ENCODE measurements at regions of chr11 and their contacts with region 1.

Region 1: DNA sequence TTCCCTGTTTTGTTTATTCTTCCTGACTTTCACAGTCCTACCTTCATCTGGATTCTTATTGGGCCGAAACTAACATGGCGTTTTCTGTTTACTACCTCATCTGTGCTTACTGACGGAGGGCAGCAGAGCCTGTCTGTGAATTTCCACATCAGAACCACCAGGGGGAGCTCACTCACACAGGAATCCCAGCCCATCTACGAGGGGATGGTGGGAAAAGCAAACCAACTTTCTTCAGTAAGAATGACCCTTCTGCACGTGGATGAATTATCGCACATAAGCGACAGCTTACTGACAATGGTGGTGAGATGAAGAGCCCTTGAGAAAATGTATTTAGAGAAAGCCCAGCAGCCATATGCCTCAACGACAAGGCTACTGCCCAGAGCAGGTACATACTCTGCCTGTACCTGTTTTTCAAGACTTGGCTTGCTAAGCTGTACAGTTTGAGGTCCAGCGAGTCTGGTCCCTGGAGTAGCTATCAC is 42.5 kb downstream of the LARGE2 start:
- DNase-seq: peak; percentile 66
- ATAC-seq: peak; percentile 99
- H3K4me3 Mint-ChIP-seq: no peak overlapping the region
- H3K27ac Mint-ChIP-seq: no peak overlapping the region
- H3K4me1 Mint-ChIP-seq: no peaks in the 10 kb centered on the region
- H3K27me3 Mint-ChIP-seq: no peaks in the 10 kb centered on the region
- CTCF ChIP-seq: peak; percentile 85

Region 2: GRCh38 chr11:45872513-45873356 is 92.2 kb before region 1 on chr11:
- CTCF ChIA-PET with region 1: interaction called, 12 read pairs
- POLR2A ChIA-PET with region 1: no interaction called
- DNase-seq: peak; percentile 87
- ATAC-seq: peak; percentile 100
- H3K4me3 Mint-ChIP-seq: no peak overlapping the region
- H3K27ac Mint-ChIP-seq: no peak overlapping the region
- H3K4me1 Mint-ChIP-seq: peaks cover 27% of the 10 kb centered on the region
- H3K27me3 Mint-ChIP-seq: no peaks in the 10 kb centered on the region
- CTCF ChIP-seq: peak; percentile 68

Region 3: GRCh38 chr11:45930031-45930794 is 34.7 kb before region 1 on chr11:
- CTCF ChIA-PET with region 1: interaction called, 11 read pairs
- POLR2A ChIA-PET with region 1: no interaction called
- DNase-seq: no peak
- ATAC-seq: no peak; the same call in 1 of the 2 replicates
- H3K4me3 Mint-ChIP-seq: no peak overlapping the region
- H3K27ac Mint-ChIP-seq: peak overlapping the region; percentile 60
- H3K4me1 Mint-ChIP-seq: no peaks in the 10 kb centered on the region; the same call in 1 of the 2 replicates
- H3K27me3 Mint-ChIP-seq: no peaks in the 10 kb centered on the region
- CTCF ChIP-seq: no peak

Region 4: GRCh38 chr11:45949992-45950407 is 14.9 kb before region 1 on chr11:
- CTCF ChIA-PET with region 1: interaction called, 10 read pairs
- POLR2A ChIA-PET with region 1: no interaction called
- DNase-seq: no peak
- ATAC-seq: no peak
- H3K4me3 Mint-ChIP-seq: no peak overlapping the region
- H3K27ac Mint-ChIP-seq: no peak overlapping the region
- H3K4me1 Mint-ChIP-seq: no peaks in the 10 kb centered on the region
- H3K27me3 Mint-ChIP-seq: no peaks in the 10 kb centered on the region
- CTCF ChIP-seq: no peak

Region 5: GRCh38 chr11:45993531-45994001 is 28.6 kb after region 1 on chr11:
- CTCF ChIA-PET with region 1: interaction called, 66 read pairs
- POLR2A ChIA-PET with region 1: interaction called, 4 read pairs
- DNase-seq: no peak
- ATAC-seq: no peak
- H3K4me3 Mint-ChIP-seq: no peak overlapping the region
- H3K27ac Mint-ChIP-seq: peak overlapping the region; percentile 90
- H3K4me1 Mint-ChIP-seq: peaks cover 52% of the 10 kb centered on the region
- H3K27me3 Mint-ChIP-seq: no peaks in the 10 kb centered on the region
- CTCF ChIP-seq: no peak

Region 6: DNA sequence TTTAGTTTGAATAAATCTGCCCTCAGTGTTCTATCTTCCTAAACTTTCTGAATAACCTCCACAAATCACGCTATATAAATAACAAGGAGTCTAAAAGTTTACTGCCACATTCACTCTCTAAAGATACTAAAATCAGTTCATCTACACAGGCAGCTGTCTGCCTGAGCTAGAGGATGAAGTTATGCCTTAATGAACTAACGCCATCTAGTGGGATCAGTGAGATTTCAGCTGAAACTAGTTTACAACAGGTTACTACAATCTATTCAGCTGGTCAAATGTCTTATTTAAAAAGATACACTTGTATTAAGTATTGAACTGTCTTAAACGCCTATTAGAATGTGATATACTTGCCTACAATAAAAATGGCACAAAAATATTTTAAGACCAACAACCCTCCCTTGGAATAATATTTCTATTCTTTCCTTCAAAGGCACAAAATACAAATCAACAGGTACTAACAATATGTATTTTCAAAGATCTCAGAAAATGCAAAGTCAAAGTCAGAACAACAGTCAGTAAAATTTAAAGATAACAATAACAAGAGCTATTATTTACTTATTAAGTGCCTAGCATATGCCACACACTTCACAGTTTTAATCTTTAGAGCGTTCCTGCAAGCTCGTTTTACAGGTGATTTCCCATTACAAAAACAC is 41.6 kb after region 1 on chr11:
- CTCF ChIA-PET with region 1: interaction called, 156 read pairs
- POLR2A ChIA-PET with region 1: interaction called, 9 read pairs
- DNase-seq: no peak
- ATAC-seq: peak; percentile 74
- H3K4me3 Mint-ChIP-seq: no peak overlapping the region
- H3K27ac Mint-ChIP-seq: peak overlapping the region; percentile 58
- H3K4me1 Mint-ChIP-seq: peaks cover 52% of the 10 kb centered on the region
- H3K27me3 Mint-ChIP-seq: no peaks in the 10 kb centered on the region
- CTCF ChIP-seq: peak; percentile 61

Region 7: DNA sequence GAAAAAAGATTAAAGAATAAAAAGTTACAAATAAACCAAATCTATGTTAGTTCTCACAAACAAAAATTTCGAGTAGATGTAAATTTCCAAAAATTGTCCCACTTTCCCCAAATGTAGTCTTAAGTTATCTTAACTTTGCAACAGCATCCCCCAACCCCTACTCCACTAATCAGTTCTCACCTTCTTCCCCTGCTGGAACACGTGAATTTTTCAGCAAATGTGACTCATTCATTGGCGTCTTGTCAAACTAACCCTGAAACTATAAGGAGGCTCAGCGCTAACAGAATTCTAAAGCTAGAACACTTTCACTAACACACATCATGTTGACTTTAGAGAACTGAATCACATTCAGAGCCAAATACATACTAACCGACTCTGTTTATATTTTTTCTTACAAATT is 110.2 kb after region 1 on chr11:
- CTCF ChIA-PET with region 1: interaction called, 17 read pairs
- POLR2A ChIA-PET with region 1: no interaction called
- DNase-seq: no peak
- ATAC-seq: no peak
- H3K4me3 Mint-ChIP-seq: no peak overlapping the region
- H3K27ac Mint-ChIP-seq: no peak overlapping the region; the same call in 1 of the 2 replicates
- H3K4me1 Mint-ChIP-seq: peaks cover 11% of the 10 kb centered on the region
- H3K27me3 Mint-ChIP-seq: no peaks in the 10 kb centered on the region
- CTCF ChIP-seq: no peak